A549 (cell line): ENCODE measurements at regions of chr12 and their contacts with region 1.

Region 1: DNA sequence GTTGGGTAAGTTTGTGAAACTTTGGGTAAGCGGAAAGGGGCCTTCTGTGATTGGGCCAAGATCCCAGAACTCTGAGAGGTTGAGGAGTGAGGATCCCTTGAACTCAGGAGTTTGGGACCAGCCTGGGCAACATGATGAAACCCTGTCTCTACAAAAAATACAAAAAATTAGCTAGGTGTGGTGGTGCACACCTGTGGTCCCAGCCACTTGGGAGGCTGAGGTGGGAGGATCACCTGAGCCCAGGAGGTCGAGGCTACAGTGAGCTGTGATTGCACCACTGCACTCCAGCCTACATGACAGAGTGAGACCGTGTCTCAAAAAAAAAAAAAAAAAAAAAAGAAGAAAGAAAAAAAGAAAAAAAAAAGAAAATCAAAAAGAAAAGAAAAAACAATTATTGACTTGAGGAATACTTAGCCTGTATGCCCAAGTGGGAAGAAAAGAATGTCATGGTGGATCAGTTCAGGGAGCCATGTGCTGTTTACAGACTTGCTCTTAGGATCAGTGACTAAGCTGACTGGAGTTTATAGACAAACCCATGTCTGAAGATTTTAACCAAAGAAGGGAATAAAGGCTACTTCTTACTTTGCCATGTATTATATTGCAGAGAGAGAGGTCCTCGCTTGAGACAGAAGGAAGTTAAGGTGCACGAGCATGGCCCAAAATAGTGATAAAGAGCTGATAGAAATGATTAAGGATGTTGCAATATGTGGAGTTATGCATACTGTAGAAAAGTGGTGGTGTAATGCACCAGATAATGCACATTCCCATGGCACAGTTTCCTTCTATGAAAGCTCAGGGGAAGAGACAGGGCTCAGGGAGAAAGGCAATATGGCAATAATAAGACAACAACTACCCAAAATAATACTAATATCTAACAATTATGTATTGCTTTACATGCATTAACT is 881 bp downstream of the HSD17B6 start:
- DNase-seq: peak in 1 of 2 experiments; percentile 54
- ATAC-seq: peak; percentile 22 to 66; a peak in 3 of 6 replicates
- H3K4me3 ChIP-seq: no peak overlapping the region
- H3K27ac ChIP-seq: no peak overlapping the region
- H3K4me1 ChIP-seq: peaks cover 12% of the 10 kb centered on the region; the same call in 1 of the 3 replicates
- CTCF ChIP-seq: no peak
- EP300 ChIP-seq: no peak
- POLR2A ChIP-seq: no peak
- RAD21 ChIP-seq: no peak

Region 2: GRCh38 chr12:56084958-56085543 is 679.0 kb before region 1 on chr12:
- CTCF ChIA-PET with region 1: no interaction called
- POLR2A ChIA-PET with region 1: no interaction called
- DNase-seq: peak; percentile 53 to 62
- ATAC-seq: peak in 1 of 2 experiments; percentile 65; a peak in 3 of 6 replicates
- H3K4me3 ChIP-seq: no peak overlapping the region
- H3K27ac ChIP-seq: no peak overlapping the region
- H3K4me1 ChIP-seq: peaks cover 30% of the 10 kb centered on the region
- CTCF ChIP-seq: peak; percentile 31; the same call in 2 of the 3 replicates
- EP300 ChIP-seq: no peak
- POLR2A ChIP-seq: no peak
- RAD21 ChIP-seq: peak in 1 of 2 experiments; percentile 42; a peak in 2 of 5 replicates

Region 3: DNA sequence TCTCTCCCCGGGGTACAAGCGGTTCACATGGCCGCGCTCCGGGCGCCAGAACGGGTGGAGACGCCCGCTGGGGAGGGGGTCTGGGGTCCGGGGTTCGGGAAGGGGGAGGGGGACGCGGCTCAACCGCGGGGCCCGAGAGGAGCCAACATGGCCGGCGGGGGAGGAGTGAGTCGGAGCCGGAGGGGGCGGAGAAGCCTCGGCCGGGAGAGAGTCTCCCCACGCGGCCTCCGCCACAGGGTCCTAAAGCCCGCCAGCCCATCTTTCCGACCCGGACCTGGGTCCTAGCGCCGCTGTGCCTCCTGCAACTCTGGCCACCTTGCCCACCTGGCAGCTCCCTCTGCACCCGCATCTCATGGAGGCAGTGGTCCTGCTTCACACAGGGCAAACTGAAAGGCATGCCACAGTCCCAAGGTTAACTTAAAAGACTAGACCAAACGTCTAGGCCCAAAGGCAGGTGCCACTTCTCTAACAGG is 133.8 kb before region 1 on chr12 and contains the start of gene BAZ2A:
- CTCF ChIA-PET with region 1: no interaction called
- POLR2A ChIA-PET with region 1: no interaction called
- DNase-seq: peak; percentile 85 to 92
- ATAC-seq: peak; percentile 76 to 87
- H3K4me3 ChIP-seq: peak within 1 kb of the TSS; percentile 99
- H3K27ac ChIP-seq: peak within 1 kb of the TSS; percentile 97 to 99
- H3K4me1 ChIP-seq: peaks cover 42% of the 10 kb centered on the region
- CTCF ChIP-seq: no peak
- EP300 ChIP-seq: no peak
- POLR2A ChIP-seq: no peak
- RAD21 ChIP-seq: no peak
- polyA plus RNA-seq, gene BAZ2A: 59.4 and 103 TPM in 2 replicates

Region 4: DNA sequence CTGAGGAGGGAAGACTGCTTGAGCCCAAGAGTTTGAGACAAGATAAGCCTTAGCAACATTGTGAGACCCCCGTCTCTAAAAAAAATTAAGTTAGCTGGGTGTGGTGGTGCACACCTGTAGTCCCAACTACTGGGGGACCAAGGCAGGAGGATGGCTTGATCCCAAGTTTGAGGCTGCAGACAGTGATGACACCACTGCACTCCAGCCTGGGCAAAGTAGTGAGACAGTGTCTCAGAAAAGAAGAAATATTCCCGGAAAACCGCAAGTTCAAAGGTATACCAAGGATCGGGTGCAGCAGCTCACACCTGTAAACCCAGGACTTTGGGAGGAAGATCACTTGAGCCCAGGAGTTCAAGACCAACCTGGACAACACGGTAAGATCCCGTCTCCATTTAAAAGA is 81.7 kb before region 1 on chr12:
- CTCF ChIA-PET with region 1: no interaction called
- POLR2A ChIA-PET with region 1: no interaction called
- DNase-seq: no peak
- ATAC-seq: no peak
- H3K4me3 ChIP-seq: no peak overlapping the region
- H3K27ac ChIP-seq: no peak overlapping the region
- H3K4me1 ChIP-seq: peaks cover 42% of the 10 kb centered on the region; the same call in 2 of the 3 replicates
- CTCF ChIP-seq: no peak
- EP300 ChIP-seq: no peak
- POLR2A ChIP-seq: no peak
- RAD21 ChIP-seq: no peak

Region 5: GRCh38 chr12:56751712-56752598 is 12.1 kb before region 1 on chr12 and contains the start of gene PRIM1:
- CTCF ChIA-PET with region 1: interaction called, 12 read pairs
- POLR2A ChIA-PET with region 1: no interaction called
- DNase-seq: peak; percentile 89 to 93
- ATAC-seq: peak; percentile 95 to 96
- H3K4me3 ChIP-seq: peak within 1 kb of the TSS; percentile 67
- H3K27ac ChIP-seq: peak within 1 kb of the TSS; percentile 75 to 88
- H3K4me1 ChIP-seq: peaks cover 13% of the 10 kb centered on the region; the same call in 2 of the 3 replicates
- CTCF ChIP-seq: no peak
- EP300 ChIP-seq: no peak
- POLR2A ChIP-seq: peak; percentile 61
- RAD21 ChIP-seq: no peak
- polyA plus RNA-seq, gene PRIM1: 53.9 and 66.8 TPM in 2 replicates

Region 6: GRCh38 chr12:56993346-56993745 is 229.3 kb after region 1 on chr12:
- CTCF ChIA-PET with region 1: interaction called, 85 read pairs
- POLR2A ChIA-PET with region 1: no interaction called
- DNase-seq: no peak
- ATAC-seq: no peak
- H3K4me3 ChIP-seq: no peak overlapping the region
- H3K27ac ChIP-seq: no peak overlapping the region
- H3K4me1 ChIP-seq: 0 out of 3 replicates have a peak, but pooled peaks cover 6% of the 10 kb centered on the region
- CTCF ChIP-seq: no peak
- EP300 ChIP-seq: no peak
- POLR2A ChIP-seq: no peak
- RAD21 ChIP-seq: no peak

Region 7: GRCh38 chr12:57058454-57058853 is 294.4 kb after region 1 on chr12:
- CTCF ChIA-PET with region 1: interaction called, 38 read pairs
- POLR2A ChIA-PET with region 1: no interaction called
- DNase-seq: no peak
- ATAC-seq: no peak
- H3K4me3 ChIP-seq: no peak overlapping the region
- H3K27ac ChIP-seq: no peak overlapping the region
- H3K4me1 ChIP-seq: no peaks in the 10 kb centered on the region
- CTCF ChIP-seq: no peak
- EP300 ChIP-seq: no peak
- POLR2A ChIP-seq: no peak
- RAD21 ChIP-seq: no peak